Motor neuron (in vitro differentiated cells): ENCODE measurements at regions of chr1 and their contacts with region 1.

Region 1: GRCh38 chr1:40951943-40952743 is 27.4 kb upstream of the CTPS1 start:
- ATAC-seq: peak; percentile 17 to 86 (median 81)
- H3K4me3 ChIP-seq: no peak overlapping the region
- H3K27ac ChIP-seq: no peak overlapping the region
- H3K4me1 ChIP-seq: no peaks in the 10 kb centered on the region

Region 2: DNA sequence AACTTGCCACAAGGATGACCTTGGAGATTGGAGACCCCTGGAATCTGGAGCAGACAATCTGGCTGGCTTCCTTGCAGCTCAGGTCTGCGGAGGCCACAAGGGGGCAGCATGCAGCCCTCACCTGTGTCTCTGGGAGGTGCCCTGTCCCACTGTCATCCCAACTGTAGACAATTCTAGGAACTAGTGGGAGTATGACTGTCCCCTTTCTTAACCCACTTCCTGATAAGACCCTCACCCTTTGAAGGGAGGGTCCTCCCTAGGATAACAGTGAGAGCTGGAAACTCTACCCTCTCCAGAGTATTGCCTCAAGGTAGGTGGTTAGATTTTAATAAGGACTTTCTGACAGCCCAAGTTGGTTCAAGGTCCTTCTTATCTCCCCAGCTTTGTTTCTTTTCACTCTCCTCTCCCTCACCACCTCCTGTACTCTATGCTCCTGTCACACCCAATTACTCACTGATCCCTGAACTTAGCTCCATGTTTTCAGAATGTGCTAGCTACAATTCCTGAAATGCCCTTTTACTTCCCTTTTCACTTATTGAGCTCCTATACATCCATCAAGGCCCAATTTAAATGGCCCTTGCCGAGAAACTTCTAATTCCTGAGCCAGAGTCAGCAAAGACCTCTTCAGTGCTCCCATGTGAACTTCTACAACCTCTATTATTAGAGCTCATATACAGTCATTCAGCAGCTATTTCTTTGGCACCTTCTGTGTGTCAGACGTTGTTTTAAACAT is 177.7 kb before region 1 on chr1:
- in situ Hi-C with region 1: loop called in 1 of 9 experiments (anchors 25 kb)
- ATAC-seq: peak; percentile 61 to 86 (median 70)
- H3K4me3 ChIP-seq: no peak overlapping the region
- H3K27ac ChIP-seq: no peak overlapping the region
- H3K4me1 ChIP-seq: peaks cover 2 to 6% of the 10 kb centered on the region in 2 donors

Region 3: GRCh38 chr1:40818264-40818961 is 133.7 kb before region 1 on chr1:
- in situ Hi-C with region 1: no loop called
- ATAC-seq: peak; percentile 53 to 99 (median 88)
- H3K4me3 ChIP-seq: peak overlapping the region in 4 of 5 donors; percentile 6 to 31 (median 14)
- H3K27ac ChIP-seq: no peak overlapping the region
- H3K4me1 ChIP-seq: peaks cover 14 to 39% of the 10 kb centered on the region in 2 donors

Region 4: GRCh38 chr1:40833979-40834378 is 118.2 kb before region 1 on chr1:
- in situ Hi-C with region 1: no loop called
- ATAC-seq: no peak
- H3K4me3 ChIP-seq: no peak overlapping the region
- H3K27ac ChIP-seq: no peak overlapping the region
- H3K4me1 ChIP-seq: peaks cover 0 to 3% of the 10 kb centered on the region in 2 donors

Region 5: GRCh38 chr1:41213341-41213740 is 261.2 kb after region 1 on chr1:
- in situ Hi-C with region 1: no loop called
- ATAC-seq: no peak
- H3K4me3 ChIP-seq: no peak overlapping the region
- H3K27ac ChIP-seq: no peak overlapping the region
- H3K4me1 ChIP-seq: no peaks in the 10 kb centered on the region